Dorsolateral prefrontal cortex (tissue), 120 donors: ENCODE measurements at regions of chr14 and their contacts with region 1.

Region 1: GRCh38 chr14:32593290-32593942 is 264.3 kb downstream of the AKAP6 start:
- DNase-seq: no peak
- H3K4me3 ChIP-seq: no peak overlapping the region
- H3K27ac ChIP-seq: peak overlapping the region in 8 of 59 donors; percentile 1 to 48 (median 20)
- H3K27me3 ChIP-seq: no peaks in the 10 kb centered on the region
- CTCF ChIP-seq: no peak

Region 2: DNA sequence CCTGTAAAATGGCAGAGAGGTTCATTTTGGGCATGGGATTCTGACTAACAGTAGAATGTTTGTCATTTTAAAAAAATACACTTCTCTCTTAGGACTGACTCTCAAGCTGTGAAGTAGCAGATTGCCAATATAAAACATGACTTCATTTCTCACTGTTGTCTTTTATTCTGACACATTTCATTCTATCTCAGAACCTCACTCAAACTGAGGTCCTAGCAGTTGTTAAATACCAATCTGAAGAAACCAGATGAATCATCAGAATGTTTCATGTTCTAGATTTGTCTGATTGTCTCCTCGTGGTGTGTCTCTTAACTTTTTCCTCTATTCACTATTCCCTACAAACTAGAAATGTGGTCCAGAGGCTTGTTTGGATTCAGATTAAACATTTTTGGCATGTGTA is 68.8 kb after region 1 on chr14:
- intact Hi-C with region 1: no loop called
- DNase-seq: no peak
- H3K4me3 ChIP-seq: no peak overlapping the region
- H3K27ac ChIP-seq: peak overlapping the region in 1 of 59 donors; percentile 40
- H3K27me3 ChIP-seq: no peaks in the 10 kb centered on the region
- CTCF ChIP-seq: no peak

Region 3: GRCh38 chr14:33432407-33433023 is 839.1 kb after region 1 on chr14:
- intact Hi-C with region 1: loop called in 1 of 2 experiments (anchors 5 kb)
- DNase-seq: peak in 2 of 10 donors; percentile 42 to 49
- H3K4me3 ChIP-seq: no peak overlapping the region
- H3K27ac ChIP-seq: no peak overlapping the region
- H3K27me3 ChIP-seq: no peaks in the 10 kb centered on the region
- CTCF ChIP-seq: peak in 54 of 56 donors; percentile 5 to 74 (median 54)